Calu3 (cell line): ENCODE measurements at regions of chr10 and their contacts with region 1.

Region 1: DNA sequence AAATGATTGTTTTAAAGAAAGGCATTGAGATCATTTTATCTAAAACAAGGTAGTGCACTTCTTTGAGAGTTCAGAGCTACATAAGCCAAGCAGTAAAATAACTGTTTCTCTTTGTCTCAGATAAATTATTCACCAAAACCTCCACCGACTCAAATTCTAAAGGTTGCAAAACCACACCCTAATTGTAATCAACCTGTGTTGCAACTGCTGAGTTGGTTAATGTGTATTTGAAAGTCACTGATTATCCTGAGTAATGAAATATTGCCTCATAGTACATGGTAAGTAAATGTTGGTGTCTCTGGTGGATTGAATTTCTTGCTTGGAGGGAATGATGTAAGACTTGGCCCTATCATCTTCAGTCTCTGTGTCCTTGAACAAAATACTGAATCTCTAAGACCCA is 35.9 kb upstream of the CYP2C9 start:
- DNase-seq: peak; percentile 40
- H3K4me3 Mint-ChIP-seq: no peak overlapping the region
- H3K27ac Mint-ChIP-seq: peak overlapping the region; percentile 64
- H3K4me1 Mint-ChIP-seq: peaks cover 9% of the 10 kb centered on the region
- H3K27me3 Mint-ChIP-seq: no peaks in the 10 kb centered on the region
- CTCF ChIP-seq: no peak

Region 2: DNA sequence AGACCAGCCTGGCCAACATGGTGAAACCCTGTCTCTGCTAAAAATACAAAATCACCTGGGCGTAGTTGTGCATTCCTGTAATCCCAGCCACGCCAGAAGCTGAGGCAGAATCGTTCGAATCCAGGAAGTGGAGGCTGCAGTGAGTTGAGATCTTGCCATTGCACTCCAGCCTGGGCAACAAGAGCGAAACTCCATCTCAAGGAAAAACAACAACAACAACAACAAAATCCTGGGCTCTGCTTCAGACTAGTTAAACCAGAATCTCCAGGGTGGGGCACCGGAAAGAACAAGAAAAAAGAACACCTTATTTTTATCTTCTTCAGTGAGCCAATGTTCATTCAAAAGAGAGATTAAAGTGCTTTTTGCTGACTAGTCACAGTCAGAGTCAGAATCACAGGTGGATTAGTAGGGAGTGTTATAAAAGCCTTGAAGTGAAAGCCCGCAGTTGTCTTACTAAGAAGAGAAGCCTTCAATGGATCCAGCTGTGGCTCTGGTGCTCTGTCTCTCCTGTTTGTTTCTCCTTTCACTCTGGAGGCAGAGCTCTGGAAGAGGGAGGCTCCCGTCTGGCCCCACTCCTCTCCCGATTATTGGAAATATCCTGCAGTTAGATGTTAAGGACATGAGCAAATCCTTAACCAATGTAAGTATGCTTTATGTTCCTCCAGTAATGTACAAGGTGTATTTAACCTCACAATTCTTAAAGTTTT is 219.1 kb before region 1 on chr10 and contains the start of gene CYP2C18:
- CTCF ChIA-PET with region 1: interaction called, 3 read pairs
- intact Hi-C with region 1: loop called (anchors 2 kb)
- DNase-seq: no peak
- H3K4me3 Mint-ChIP-seq: peak within 1 kb of the TSS; percentile 72
- H3K27ac Mint-ChIP-seq: peak within 1 kb of the TSS; percentile 91
- H3K4me1 Mint-ChIP-seq: peaks cover 41% of the 10 kb centered on the region
- H3K27me3 Mint-ChIP-seq: no peaks in the 10 kb centered on the region
- CTCF ChIP-seq: no peak
- total RNA-seq, gene CYP2C18: 13.0 and 18.1 TPM in 2 replicates